AG04450 (cell line): ENCODE measurements at regions of chr15 and their contacts with region 1.

Region 1: DNA sequence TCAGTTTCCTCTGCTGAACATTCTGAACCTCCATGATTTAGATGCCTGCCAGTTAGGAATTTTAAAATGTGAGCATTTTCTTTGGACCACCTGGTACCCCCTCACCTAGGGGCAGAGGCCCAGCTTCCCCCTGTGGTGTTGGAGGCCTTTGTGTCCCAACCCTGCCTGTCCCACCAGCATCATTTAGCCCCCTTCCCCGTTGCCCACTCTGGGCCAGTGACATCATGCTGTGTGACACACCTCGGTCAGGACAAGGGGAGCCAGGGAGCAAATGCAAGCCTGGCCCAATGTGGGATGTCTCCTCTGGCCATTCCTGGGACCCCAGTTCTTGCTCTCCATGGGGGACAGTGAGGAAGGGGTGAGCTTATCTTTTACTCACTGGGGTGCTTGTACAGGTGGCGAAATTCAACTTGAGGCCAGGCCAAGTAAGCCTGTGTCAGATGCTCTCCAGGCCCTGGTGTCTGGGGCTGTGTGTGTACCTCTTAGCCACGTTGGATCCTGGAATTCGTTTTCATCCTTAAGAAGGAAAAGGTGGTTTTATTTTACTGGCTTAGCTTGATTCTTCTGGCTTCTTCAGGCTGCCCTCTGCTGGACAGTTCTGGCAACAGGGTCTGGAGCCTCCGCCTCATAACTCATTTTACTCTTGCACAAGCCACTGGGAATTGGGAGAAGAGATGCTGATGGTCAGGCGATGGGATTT is 49.7 kb upstream of the MYZAP start:
- DNase-seq: peak; percentile 52
- H3K4me3 ChIP-seq: no peak overlapping the region
- H3K27ac ChIP-seq: no peak overlapping the region
- H3K27me3 ChIP-seq: peaks cover 15% of the 10 kb centered on the region
- CTCF ChIP-seq: peak; percentile 95

Region 2: GRCh38 chr15:57146506-57147201 is 395.3 kb before region 1 on chr15:
- CTCF ChIA-PET with region 1: interaction called, 16 read pairs
- POLR2A ChIA-PET with region 1: no interaction called
- DNase-seq: no peak
- H3K4me3 ChIP-seq: peak overlapping the region; percentile 26
- H3K27ac ChIP-seq: no peak overlapping the region
- H3K27me3 ChIP-seq: no peaks in the 10 kb centered on the region
- CTCF ChIP-seq: peak; percentile 70

Region 3: GRCh38 chr15:57356636-57357035 is 185.3 kb before region 1 on chr15:
- CTCF ChIA-PET with region 1: interaction called, 11 read pairs
- POLR2A ChIA-PET with region 1: no interaction called
- DNase-seq: no peak
- H3K4me3 ChIP-seq: no peak overlapping the region
- H3K27ac ChIP-seq: no peak overlapping the region
- H3K27me3 ChIP-seq: peaks cover 3% of the 10 kb centered on the region
- CTCF ChIP-seq: no peak

Region 4: GRCh38 chr15:57451555-57451954 is 90.4 kb before region 1 on chr15:
- CTCF ChIA-PET with region 1: no interaction called
- POLR2A ChIA-PET with region 1: no interaction called
- DNase-seq: no peak
- H3K4me3 ChIP-seq: no peak overlapping the region
- H3K27ac ChIP-seq: no peak overlapping the region
- H3K27me3 ChIP-seq: peaks cover 8% of the 10 kb centered on the region
- CTCF ChIP-seq: no peak

Region 5: DNA sequence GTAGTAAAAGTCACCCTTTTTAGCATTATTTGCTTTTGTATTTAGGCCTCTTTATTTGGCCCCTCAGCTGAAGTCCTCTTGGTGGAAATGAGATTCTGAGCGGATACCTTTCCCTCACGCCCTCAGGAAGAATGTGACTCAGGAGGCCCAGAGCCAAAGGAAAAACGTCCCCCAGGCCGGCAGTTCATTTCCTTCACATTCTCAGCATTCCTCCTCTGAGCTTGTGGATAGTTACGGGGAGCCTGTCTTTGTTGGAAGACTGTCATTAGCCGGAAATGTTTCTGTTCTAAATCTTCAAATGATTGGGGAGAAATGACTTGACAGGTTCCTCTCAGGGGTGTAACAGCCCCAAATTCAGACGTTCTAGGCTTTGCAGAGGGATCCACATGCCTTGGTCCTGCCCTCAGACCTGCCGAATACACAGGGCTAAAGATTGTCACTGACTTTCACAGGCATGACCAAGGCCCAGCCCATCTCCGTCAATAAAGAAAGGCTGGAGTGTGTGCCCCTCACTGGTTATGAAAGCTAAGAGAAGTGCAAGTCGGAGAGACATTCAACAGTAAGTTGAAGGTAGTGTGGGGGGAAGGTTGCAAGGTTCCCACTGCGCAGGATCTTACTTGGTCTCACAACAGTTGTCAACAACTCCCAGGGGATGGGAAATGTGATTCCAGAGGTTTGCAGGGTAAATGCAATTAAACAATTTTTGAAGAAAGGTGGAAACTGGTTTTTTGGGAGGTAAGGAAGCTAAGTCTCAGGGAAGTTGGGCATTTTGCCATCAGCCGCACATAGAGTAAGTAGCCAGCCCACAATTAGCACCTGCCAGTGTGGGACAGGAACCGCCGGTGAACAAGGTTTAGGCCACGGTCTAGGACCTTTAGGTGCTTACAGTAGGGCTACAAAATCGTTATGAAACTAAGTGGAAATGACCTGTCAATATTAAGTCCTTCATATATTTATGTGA is 10.0 kb after region 1 on chr15:
- CTCF ChIA-PET with region 1: interaction called, 47 read pairs
- POLR2A ChIA-PET with region 1: no interaction called
- DNase-seq: peak; percentile 38
- H3K4me3 ChIP-seq: no peak overlapping the region
- H3K27ac ChIP-seq: peak overlapping the region; percentile 75
- H3K27me3 ChIP-seq: peaks cover 1% of the 10 kb centered on the region
- CTCF ChIP-seq: no peak

Region 6: DNA sequence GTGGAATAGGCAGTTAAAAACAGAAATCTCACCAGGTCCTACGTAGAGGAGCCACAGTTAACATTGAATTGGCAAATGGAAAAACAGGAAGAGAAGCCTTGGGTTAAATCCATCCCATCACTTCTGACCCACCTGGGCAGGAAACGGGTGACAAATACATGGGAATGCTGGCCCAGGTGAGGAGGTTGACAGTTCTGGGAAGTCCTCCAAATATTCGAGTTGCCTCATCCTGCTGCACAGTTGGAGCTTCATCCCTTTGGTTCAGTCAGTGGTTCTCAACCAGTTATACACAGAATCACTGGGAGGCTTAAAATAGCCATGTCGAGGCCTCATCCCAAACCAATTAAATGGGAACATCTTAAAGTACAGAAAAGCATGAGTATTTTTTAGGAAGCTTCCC is 55.0 kb after region 1 on chr15:
- CTCF ChIA-PET with region 1: no interaction called
- POLR2A ChIA-PET with region 1: no interaction called
- DNase-seq: no peak
- H3K4me3 ChIP-seq: no peak overlapping the region
- H3K27ac ChIP-seq: no peak overlapping the region
- H3K27me3 ChIP-seq: peaks cover 25% of the 10 kb centered on the region
- CTCF ChIP-seq: no peak